ENCODE measurements at regions of chr19 and their contacts with region 1.

Region 1: DNA sequence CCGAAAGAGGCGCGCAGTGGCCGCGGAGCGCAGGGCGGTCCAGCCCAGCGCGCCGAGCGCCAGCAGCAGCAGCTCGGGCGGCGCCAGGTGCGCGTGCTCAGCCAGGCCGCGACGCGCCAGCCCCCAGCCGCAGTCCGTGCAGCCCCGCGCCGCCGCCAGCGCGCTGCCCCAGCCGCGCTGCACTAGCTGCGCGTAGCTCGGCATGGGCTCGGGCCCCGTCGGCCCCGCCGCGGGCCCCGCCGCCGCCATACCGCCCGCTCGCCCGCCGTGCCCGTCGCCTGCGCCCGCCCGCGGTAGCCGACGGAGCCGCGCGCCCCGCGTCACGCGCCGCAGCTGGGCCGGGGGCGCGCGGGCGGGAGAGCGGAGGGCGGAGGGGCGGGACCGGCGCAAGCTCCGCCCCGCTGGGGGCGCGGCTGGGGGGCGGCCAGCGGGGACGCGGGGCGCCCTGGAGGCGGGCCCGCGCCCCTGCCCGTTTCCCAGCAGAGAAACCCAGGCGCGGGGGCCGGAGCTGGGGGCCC is at the start of gene CERS1:
- DNase-seq: no peak
- ATAC-seq: peak; percentile 42
- H3K4me3 ChIP-seq: peak within 1 kb of the TSS; percentile 47
- H3K27ac ChIP-seq: no peak within 1 kb of the TSS
- H3K4me1 ChIP-seq: peaks cover 8% of the 10 kb centered on the region; the same call in 1 of the 2 replicates
- H3K27me3 ChIP-seq: peaks cover 7% of the 10 kb centered on the region; the same call in 1 of the 2 replicates
- CTCF ChIP-seq: no peak
- POLR2A ChIP-seq: no peak
- RAD21 ChIP-seq: no peak
- total RNA-seq, gene CERS1: 0.56 and 0.90 TPM in 2 replicates

Region 2: DNA sequence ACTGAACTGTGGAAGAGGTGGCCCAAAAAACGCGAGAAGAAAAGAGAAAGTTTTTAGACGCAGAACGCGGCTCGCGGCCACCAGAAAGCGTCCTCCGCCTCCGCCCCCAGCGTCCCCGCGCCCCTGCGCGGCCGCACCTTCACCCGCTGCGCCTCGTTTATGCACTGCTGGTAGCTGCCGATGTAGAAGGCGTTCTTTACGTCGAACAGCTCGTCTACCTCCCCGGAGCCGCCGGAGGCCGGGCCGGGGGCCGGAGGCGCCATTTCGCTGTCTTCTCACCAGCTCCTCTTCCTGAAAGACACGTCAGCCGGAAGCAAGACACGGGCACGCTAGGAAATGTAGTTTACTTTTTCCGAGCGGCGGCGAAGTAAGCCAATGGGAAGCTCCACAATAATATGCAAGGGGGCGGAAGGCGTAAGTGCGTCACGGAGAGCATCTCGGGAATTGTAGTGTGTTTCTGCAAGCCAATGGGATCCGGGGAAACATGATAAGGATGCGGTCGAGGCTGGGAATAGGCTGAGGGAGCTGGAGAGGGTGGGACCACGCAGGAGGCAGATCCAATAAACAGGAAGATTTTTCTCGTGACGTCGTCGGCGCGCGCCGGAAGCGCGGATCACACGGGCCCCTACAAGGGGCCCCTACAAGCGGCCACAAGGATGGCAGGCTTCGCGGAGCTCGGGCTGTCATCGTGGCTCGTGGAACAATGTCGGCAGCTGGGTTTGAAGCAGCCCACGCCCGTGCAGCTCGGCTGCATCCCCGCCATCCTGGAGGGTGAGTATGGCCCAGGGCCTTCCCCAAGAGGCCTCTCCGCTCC is 23.4 kb after region 1 on chr19 and contains the starts of genes COPE and DDX49:
- CTCF ChIA-PET with region 1: no interaction called
- POLR2A ChIA-PET with region 1: interaction called, 3 read pairs
- dilution Hi-C with region 1: no loop called
- in situ Hi-C with region 1: no loop called
- intact Hi-C with region 1: loop called (anchors 1 kb)
- DNase-seq: peak; percentile 100
- ATAC-seq: peak; percentile 98
- H3K4me3 ChIP-seq: peak within 1 kb of the TSS; percentile 72
- H3K27ac ChIP-seq: peak within 1 kb of the TSS; percentile 83
- H3K4me1 ChIP-seq: peaks cover 5% of the 10 kb centered on the region
- H3K27me3 ChIP-seq: no peaks in the 10 kb centered on the region
- CTCF ChIP-seq: no peak
- POLR2A ChIP-seq: peak; percentile 96
- RAD21 ChIP-seq: no peak
- total RNA-seq, gene COPE: 310 and 347 TPM in 2 replicates
- total RNA-seq, gene DDX49: 50.9 and 55.8 TPM in 2 replicates